PC-3 (cell line): ENCODE measurements at regions of chrX and their contacts with region 1.

Region 1: GRCh38 chrX:96372313-96373046 is 312.2 kb upstream of the DIAPH2 start:
- DNase-seq: peak; percentile 75
- ATAC-seq: peak; percentile 84
- H3K4me3 ChIP-seq: peak overlapping the region; percentile 55
- H3K27ac ChIP-seq: no peak overlapping the region
- H3K4me1 ChIP-seq: no peaks in the 10 kb centered on the region; the same call in 1 of the 2 replicates
- H3K27me3 ChIP-seq: no peaks in the 10 kb centered on the region
- CTCF ChIP-seq: peak; percentile 81

Region 2: GRCh38 chrX:96140796-96141195 is 231.7 kb before region 1 on chrX:
- CTCF ChIA-PET with region 1: no interaction called
- POLR2A ChIA-PET with region 1: no interaction called
- intact Hi-C with region 1: no loop called
- DNase-seq: peak; percentile 36
- ATAC-seq: peak; percentile 78
- H3K4me3 ChIP-seq: no peak overlapping the region
- H3K27ac ChIP-seq: no peak overlapping the region
- H3K4me1 ChIP-seq: no peaks in the 10 kb centered on the region
- H3K27me3 ChIP-seq: no peaks in the 10 kb centered on the region
- CTCF ChIP-seq: no peak

Region 3: DNA sequence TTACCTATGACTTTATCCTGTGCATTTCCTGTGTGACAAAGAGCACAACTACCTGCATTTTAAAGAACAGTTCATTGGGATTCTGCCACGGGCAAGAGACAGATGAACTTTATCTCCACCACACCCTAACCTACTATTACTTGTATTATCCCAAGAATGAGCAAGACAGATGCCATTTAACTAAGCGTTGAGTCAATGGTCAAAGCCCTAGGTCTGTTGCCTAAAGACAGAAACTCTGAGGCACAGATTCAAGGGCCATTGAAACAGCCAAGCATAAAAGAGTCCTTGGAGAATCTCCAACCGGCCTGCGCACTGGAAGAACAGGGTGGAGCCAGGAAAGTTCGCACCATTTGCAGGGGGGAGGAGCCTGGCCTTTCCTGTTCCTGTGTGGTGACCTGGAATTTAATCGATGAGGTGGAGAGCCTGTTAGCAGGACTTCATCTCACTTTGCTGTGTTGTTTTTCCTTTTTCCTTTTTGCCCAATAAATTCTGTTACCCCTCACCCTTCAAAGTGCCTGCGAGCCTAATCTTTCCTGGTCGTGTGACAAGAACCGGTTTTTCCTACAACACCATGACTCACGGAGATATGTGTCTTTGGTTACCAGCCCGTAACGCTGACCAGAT is 165.7 kb after region 1 on chrX:
- CTCF ChIA-PET with region 1: no interaction called
- POLR2A ChIA-PET with region 1: no interaction called
- intact Hi-C with region 1: loop called (anchors 1 kb)
- DNase-seq: peak; percentile 85
- ATAC-seq: peak; percentile 76
- H3K4me3 ChIP-seq: peak overlapping the region; percentile 58
- H3K27ac ChIP-seq: peak overlapping the region; percentile 96
- H3K4me1 ChIP-seq: peaks cover 28% of the 10 kb centered on the region
- H3K27me3 ChIP-seq: no peaks in the 10 kb centered on the region
- CTCF ChIP-seq: no peak

Region 4: GRCh38 chrX:96684339-96685209 is 312.1 kb after region 1 on chrX and contains the start of gene DIAPH2:
- CTCF ChIA-PET with region 1: no interaction called
- POLR2A ChIA-PET with region 1: no interaction called
- intact Hi-C with region 1: loop called (anchors 2 kb)
- DNase-seq: peak; percentile 86
- ATAC-seq: peak; percentile 86
- H3K4me3 ChIP-seq: peak within 1 kb of the TSS; percentile 95
- H3K27ac ChIP-seq: peak within 1 kb of the TSS; percentile 86
- H3K4me1 ChIP-seq: peaks cover 13% of the 10 kb centered on the region
- H3K27me3 ChIP-seq: no peaks in the 10 kb centered on the region
- CTCF ChIP-seq: 0 out of 2 replicates have a peak, but pooled peaks have one; percentile 8
- total RNA-seq, gene DIAPH2: 15.1 and 19.6 TPM in 2 replicates

Region 5: DNA sequence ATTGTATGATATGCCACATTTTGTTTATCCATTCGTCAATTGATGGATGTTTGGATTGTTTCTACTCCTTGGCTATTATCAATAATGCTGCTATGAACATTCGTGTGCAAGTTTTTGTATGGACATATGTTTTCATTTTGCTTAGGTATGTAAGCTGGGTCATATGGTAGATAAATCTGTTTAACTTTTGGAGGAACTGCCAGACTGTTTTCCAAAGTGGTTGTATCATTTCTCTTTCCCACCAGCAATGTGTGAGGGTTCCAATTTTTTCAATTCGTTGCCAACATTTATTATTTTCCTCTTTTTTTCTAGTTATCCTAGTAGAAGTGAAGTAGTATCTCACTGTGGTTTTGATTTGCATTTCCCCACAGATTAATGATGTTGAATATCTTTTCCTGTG is 384.0 kb after region 1 on chrX:
- CTCF ChIA-PET with region 1: no interaction called
- POLR2A ChIA-PET with region 1: no interaction called
- intact Hi-C with region 1: loop called (anchors 5 kb)
- DNase-seq: no peak
- ATAC-seq: no peak
- H3K4me3 ChIP-seq: no peak overlapping the region
- H3K27ac ChIP-seq: no peak overlapping the region
- H3K4me1 ChIP-seq: peaks cover 6% of the 10 kb centered on the region; the same call in 1 of the 2 replicates
- H3K27me3 ChIP-seq: no peaks in the 10 kb centered on the region
- CTCF ChIP-seq: no peak

Region 6: DNA sequence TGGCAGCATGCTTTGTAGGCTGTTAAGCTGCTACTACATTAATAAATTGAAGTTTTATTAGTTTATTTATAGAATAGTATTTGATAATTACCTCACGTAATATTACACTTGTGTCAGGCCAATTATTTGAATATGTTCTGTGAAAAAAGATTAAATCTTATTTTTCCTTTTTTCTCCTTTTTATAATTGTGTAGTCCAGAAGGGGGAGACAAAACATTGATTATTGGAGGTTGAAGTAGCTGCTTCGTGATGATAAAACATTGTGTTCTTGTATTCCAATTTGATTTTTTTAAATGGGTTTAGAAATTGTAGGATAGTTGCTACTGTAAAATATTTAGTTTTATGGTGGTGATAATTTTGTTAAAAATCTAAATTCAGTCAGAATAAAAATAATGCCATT is 397.8 kb after region 1 on chrX:
- CTCF ChIA-PET with region 1: no interaction called
- POLR2A ChIA-PET with region 1: no interaction called
- intact Hi-C with region 1: loop called (anchors 5 kb)
- DNase-seq: peak; percentile 52
- ATAC-seq: no peak
- H3K4me3 ChIP-seq: no peak overlapping the region
- H3K27ac ChIP-seq: no peak overlapping the region
- H3K4me1 ChIP-seq: no peaks in the 10 kb centered on the region
- H3K27me3 ChIP-seq: no peaks in the 10 kb centered on the region
- CTCF ChIP-seq: peak; percentile 69

Region 7: GRCh38 chrX:97057349-97058026 is 685.0 kb after region 1 on chrX:
- CTCF ChIA-PET with region 1: no interaction called
- POLR2A ChIA-PET with region 1: no interaction called
- intact Hi-C with region 1: no loop called
- DNase-seq: peak; percentile 41
- ATAC-seq: peak; percentile 54; the same call in 1 of the 2 replicates
- H3K4me3 ChIP-seq: no peak overlapping the region
- H3K27ac ChIP-seq: no peak overlapping the region
- H3K4me1 ChIP-seq: peaks cover 11% of the 10 kb centered on the region
- H3K27me3 ChIP-seq: no peaks in the 10 kb centered on the region
- CTCF ChIP-seq: no peak